PC-9 (cell line): ENCODE measurements at regions of chr10 and their contacts with region 1.

Region 1: GRCh38 chr10:104231784-104232612 is at the start of gene CFAP43:
- DNase-seq: peak; percentile 89 to 96
- H3K4me3 ChIP-seq: peak within 1 kb of the TSS; percentile 74
- H3K27ac ChIP-seq: 0 out of 2 replicates have a peak within 1 kb of the TSS, but pooled peaks have one; percentile 10
- H3K4me1 ChIP-seq: 0 out of 2 replicates have a peak, but pooled peaks cover 7% of the 10 kb centered on the region
- H3K27me3 ChIP-seq: no peaks in the 10 kb centered on the region
- CTCF ChIP-seq: no peak
- total RNA-seq, gene CFAP43: 6.0 and 7.1 TPM in 2 replicates

Region 2: GRCh38 chr10:104155591-104155990 is 76.4 kb before region 1 on chr10:
- CTCF ChIA-PET with region 1: no interaction called
- POLR2A ChIA-PET with region 1: interaction called, 11 read pairs
- intact Hi-C with region 1: no loop called
- DNase-seq: no peak
- H3K4me3 ChIP-seq: no peak overlapping the region
- H3K27ac ChIP-seq: no peak overlapping the region
- H3K4me1 ChIP-seq: no peaks in the 10 kb centered on the region
- H3K27me3 ChIP-seq: no peaks in the 10 kb centered on the region
- CTCF ChIP-seq: no peak

Region 3: DNA sequence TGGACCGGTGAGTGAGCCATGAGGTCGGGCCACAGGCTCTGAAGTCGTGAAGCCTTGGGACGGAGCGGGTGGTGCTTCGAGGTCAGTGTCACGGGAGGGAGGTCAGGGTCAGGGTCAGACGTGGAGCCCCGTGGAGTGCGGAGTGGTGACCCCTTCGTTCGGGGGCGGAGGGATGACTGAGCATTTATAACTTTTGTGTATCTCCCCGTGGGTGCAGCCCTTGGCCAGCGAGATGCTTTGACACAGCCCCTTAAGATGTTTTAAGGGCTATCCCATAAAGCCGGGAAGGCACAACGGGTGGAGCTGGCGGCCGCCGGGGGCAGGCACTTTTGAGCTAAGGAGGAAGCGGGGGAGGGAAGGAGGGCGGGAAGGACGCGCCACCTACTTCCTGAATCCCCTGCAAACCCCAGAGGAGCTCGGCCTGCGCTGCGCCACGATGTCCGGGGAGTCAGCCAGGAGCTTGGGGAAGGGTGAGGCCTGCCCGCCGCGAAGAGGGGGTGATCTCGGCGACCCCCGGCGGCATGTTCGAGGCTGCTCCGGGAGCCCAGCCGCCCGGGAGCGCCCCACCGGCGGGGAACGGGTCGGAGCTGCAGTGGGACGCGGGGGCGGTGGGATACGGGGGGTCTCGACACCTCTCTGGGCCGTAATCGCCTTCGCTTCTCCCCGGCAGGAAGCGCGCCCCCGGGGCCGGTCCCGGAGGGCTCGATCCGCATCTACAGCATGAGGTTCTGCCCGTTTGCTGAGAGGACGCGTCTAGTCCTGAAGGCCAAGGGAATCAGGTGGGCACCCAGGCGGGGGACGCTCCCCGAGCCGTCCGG is 22.7 kb after region 1 on chr10 and contains the start of gene GSTO1:
- CTCF ChIA-PET with region 1: no interaction called
- POLR2A ChIA-PET with region 1: interaction called, 4 read pairs
- intact Hi-C with region 1: loop called (anchors 2 kb)
- DNase-seq: peak; percentile 51 to 52
- H3K4me3 ChIP-seq: peak within 1 kb of the TSS; percentile 83
- H3K27ac ChIP-seq: peak within 1 kb of the TSS; percentile 60
- H3K4me1 ChIP-seq: peaks cover 30% of the 10 kb centered on the region
- H3K27me3 ChIP-seq: no peaks in the 10 kb centered on the region
- CTCF ChIP-seq: no peak
- total RNA-seq, gene GSTO1: 71.0 and 77.3 TPM in 2 replicates